GM13977 (cell line): ENCODE measurements at regions of chr18 and their contacts with region 1.

Region 1: DNA sequence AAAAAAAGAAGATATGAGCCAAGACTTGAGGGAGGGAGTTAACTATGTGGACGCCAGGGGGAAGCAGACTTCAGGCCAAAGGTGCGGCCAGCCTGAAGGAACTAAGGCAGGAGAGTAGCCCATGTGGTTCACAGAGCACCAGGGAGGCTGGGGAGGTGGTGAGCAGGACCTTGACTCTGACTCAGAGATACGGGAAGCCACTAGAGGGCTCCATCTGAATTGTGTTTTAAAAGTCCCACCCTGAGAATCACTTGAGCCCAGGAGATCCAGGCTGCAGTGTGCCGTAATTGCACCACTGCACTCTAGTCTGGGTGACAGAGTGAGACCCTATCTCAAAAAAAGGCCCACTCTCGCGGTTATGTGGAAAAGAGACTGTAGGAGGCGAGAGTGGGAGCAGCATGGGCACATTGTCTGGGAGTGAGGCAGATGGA is 12.3 kb downstream of the CEP192 start:
- DNase-seq: no peak
- CTCF ChIP-seq: peak; percentile 55

Region 2: DNA sequence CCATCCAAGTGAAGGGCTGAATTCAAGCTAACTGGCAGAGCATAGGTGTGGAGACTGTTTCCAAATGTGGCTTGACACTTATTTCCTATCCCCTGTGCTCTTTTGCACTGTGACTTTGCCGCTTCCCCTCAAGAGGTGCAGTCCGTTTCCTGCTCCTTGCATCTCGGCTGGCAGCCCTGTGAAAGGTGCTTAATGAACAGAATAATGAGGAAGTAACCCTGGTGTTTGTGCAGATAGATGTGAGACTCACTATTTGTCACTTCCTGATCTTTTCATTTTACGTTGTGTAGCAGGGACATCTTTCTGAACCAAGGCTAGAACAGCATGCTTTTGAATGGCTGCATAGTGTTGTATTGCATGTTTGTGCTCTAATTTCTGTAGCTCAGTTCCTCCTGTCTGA is 48.5 kb after region 1 on chr18:
- in situ Hi-C with region 1: no loop called
- DNase-seq: no peak
- CTCF ChIP-seq: no peak

Region 3: DNA sequence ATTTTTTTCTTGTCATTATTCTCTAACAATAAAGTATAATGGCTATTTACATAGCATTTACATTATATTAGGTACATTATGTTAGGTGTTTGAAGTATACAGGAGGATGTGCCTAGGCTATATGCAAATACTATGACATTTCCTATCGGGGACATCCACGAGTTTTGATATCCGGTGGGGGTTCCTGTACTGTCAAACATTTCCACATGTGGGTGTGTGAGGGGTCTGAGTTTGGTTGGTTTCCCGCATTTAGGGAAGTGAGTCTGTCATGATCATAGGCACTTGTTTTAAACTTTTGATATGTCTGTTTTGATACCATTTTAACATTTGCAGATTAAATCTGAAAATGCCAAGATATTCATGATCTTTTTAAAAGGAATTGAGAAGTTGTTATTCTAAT is 63.6 kb after region 1 on chr18:
- in situ Hi-C with region 1: no loop called
- DNase-seq: no peak
- CTCF ChIP-seq: no peak

Region 4: DNA sequence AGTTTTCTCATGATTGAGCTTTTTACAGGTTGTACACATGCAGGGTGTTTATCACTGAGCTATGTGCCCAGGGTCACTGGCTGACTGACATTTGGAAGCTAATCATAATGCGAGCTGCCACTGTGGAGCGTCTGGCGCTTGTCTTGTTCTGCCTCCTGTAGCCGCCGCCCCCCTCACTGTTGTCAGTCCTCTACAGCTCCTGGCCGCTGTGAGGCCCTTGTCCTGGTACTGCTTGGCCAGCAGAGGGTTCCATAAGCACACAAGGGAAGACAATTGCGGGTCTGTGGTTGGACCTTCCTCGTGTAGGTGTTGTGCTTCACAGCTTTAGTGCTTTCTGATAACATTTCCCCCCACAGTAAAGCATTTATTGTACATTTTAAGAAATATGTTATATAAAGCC is 109.5 kb after region 1 on chr18:
- in situ Hi-C with region 1: loop called (anchors 25 kb)
- DNase-seq: no peak
- CTCF ChIP-seq: peak; percentile 20